ENCODE measurements at regions of chr11 and their contacts with region 1.

Region 1: GRCh38 chr11:16468735-16469453 is 112.5 kb upstream of the SOX6 start:
- DNase-seq: no peak
- H3K4me3 ChIP-seq: no peak overlapping the region
- CTCF ChIP-seq: no peak

Region 2: DNA sequence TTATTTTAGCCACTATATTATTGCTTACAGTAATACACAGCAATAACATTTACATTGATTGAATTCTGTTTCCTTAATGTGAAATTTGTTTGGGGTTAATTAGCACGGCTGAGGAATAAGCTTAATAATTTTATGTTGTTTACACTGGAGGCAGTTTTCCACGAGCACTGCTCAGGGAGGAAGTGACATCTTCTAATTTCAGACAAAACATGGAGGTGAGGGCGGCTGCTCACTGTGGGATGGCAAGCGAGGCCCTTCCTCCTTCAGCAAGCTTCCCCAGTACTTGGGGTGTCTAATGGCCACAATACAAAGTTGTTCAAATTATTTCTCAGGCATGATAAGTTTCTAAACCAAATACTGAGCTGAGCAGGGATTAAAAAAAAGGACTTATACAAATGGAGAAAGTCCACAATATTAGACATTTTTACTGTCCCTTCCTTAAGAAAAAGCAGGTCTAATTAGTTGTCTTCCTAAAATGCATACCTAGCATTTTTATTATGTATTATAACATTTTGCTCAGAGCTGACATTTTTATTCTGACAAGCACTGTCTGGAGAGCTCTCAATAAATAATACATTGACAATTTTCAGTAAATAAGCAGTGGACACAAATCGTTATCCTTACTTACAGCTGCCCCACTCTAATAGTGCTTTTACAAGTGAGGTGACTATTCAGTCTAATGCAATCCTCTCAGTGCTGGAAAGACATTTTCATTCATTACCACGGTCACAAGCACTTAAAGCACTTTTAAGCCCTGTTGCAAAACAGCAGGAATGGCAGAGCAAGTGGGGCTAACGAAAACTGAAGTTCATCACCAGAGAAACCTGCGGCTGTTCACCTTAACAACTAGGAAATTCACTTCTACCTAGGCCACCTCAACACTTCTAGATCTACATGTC is 168.8 kb before region 1 on chr11:
- in situ Hi-C with region 1: no loop called
- DNase-seq: no peak
- H3K4me3 ChIP-seq: no peak overlapping the region
- CTCF ChIP-seq: no peak

Region 3: GRCh38 chr11:16421826-16422225 is 47.1 kb before region 1 on chr11:
- in situ Hi-C with region 1: loop called (anchors 5 kb)
- DNase-seq: no peak
- H3K4me3 ChIP-seq: no peak overlapping the region
- CTCF ChIP-seq: no peak

Measured in astrocyte of the cerebellum (primary cell).